ENCODE measurements at regions of chr1 and their contacts with region 1.

Region 1: DNA sequence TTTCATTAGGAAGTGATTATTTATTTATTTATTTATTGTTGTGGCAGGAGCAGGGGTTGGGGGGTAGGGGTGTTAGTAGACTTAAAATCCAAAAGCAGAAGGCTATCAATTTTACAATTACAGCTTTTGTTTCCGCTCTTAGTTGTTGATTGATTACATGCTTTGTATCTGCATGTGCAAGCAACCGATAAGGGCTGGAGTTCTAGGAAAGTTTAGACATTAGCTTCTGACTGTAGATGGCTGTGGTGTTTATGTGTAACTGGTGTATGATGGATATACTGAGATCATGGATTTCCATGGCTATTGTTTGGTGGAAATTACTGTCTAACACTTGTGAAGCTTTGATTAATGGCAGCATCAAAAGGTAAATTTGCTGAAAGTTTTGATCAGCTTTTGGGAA is 2.8 kb downstream of the ST6GALNAC5 start:
- DNase-seq: no peak
- ATAC-seq: no peak
- H3K4me3 ChIP-seq: no peak overlapping the region
- H3K4me3 Mint-ChIP-seq: no peak overlapping the region
- H3K27ac ChIP-seq: no peak overlapping the region
- H3K27ac Mint-ChIP-seq: no peak overlapping the region
- H3K4me1 ChIP-seq: no peaks in the 10 kb centered on the region
- H3K4me1 Mint-ChIP-seq: peaks cover 7% of the 10 kb centered on the region
- H3K27me3 ChIP-seq: peaks cover 3 to 9% of the 10 kb centered on the region in 2 experiments
- H3K27me3 Mint-ChIP-seq: peaks cover 47% of the 10 kb centered on the region
- CTCF ChIP-seq: no peak

Region 2: DNA sequence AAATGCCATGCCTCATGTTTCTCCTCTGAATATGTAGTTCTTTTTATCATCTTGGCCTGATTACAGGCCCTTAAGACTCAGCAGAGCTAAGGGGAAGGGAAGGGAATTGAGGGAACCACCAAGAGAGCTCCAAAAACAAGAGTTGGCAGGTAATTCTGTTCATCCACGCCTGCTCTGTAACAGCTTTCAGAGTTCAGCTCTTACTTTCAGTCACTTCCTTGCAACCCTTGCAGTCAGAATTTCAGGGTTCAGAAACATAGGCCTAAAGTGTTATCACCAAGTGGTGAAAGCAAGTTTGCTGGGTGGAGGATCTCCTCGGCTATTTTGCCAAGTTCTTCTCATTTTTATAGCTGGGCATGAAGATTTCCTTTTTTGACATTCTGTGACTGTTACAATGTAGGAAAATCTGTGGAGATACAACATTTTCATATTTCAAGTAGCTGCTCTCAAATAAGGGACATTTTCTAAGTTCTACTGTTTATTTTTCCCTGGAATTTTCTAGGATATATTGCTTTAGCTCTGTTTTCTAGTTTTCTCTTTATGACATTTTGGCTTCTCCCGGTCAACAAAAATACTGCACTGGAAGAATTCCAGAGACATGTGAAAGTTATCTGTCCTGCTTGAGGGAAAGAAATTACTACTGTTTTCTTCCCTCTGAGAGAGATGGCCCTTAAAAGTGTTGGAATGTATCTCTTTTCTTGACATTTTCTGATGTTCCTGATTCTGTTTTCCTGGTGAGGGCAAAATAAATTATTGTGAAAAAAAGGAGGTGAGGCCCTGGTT is 254.6 kb before region 1 on chr1:
- CTCF ChIA-PET with region 1: no interaction called
- POLR2A ChIA-PET with region 1: no interaction called
- intact Hi-C with region 1: no loop called
- DNase-seq: no peak
- ATAC-seq: no peak
- H3K4me3 ChIP-seq: no peak overlapping the region
- H3K4me3 Mint-ChIP-seq: no peak overlapping the region
- H3K27ac ChIP-seq: no peak overlapping the region
- H3K27ac Mint-ChIP-seq: no peak overlapping the region
- H3K4me1 ChIP-seq: no peaks in the 10 kb centered on the region
- H3K4me1 Mint-ChIP-seq: no peaks in the 10 kb centered on the region
- H3K27me3 ChIP-seq: no peaks in the 10 kb centered on the region
- H3K27me3 Mint-ChIP-seq: no peaks in the 10 kb centered on the region
- CTCF ChIP-seq: no peak

Region 3: DNA sequence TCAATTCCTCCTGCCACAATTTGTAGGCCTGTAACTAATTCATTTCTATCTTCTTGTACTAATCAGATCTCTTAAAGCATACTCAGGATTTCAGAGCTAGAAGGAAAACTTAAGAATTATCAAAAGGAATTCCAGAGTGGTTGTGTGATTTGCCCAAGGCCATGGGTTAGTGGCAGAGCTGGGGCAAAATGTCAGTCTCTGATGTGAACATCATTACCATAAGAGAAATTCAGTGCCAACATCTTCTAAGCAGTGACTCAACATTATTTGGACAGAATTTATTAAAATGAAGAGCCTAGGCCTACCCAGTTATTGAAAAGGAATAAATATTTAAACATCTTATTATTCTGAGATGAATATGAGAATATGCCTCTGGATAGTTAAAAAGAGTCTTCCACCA is 11.7 kb after region 1 on chr1:
- CTCF ChIA-PET with region 1: no interaction called
- POLR2A ChIA-PET with region 1: no interaction called
- intact Hi-C with region 1: loop called in 1 of 2 experiments (anchors 1 kb)
- DNase-seq: no peak
- ATAC-seq: no peak
- H3K4me3 ChIP-seq: no peak overlapping the region
- H3K4me3 Mint-ChIP-seq: no peak overlapping the region
- H3K27ac ChIP-seq: no peak overlapping the region
- H3K27ac Mint-ChIP-seq: no peak overlapping the region
- H3K4me1 ChIP-seq: no peaks in the 10 kb centered on the region
- H3K4me1 Mint-ChIP-seq: no peaks in the 10 kb centered on the region
- H3K27me3 ChIP-seq: no peaks in the 10 kb centered on the region
- H3K27me3 Mint-ChIP-seq: no peaks in the 10 kb centered on the region
- CTCF ChIP-seq: no peak

Region 4: GRCh38 chr1:77060000-77060399 is 190.0 kb after region 1 on chr1:
- CTCF ChIA-PET with region 1: no interaction called
- POLR2A ChIA-PET with region 1: no interaction called
- intact Hi-C with region 1: no loop called
- DNase-seq: no peak
- ATAC-seq: no peak
- H3K4me3 ChIP-seq: no peak overlapping the region
- H3K4me3 Mint-ChIP-seq: no peak overlapping the region
- H3K27ac ChIP-seq: no peak overlapping the region
- H3K27ac Mint-ChIP-seq: no peak overlapping the region
- H3K4me1 ChIP-seq: no peaks in the 10 kb centered on the region
- H3K4me1 Mint-ChIP-seq: no peaks in the 10 kb centered on the region
- H3K27me3 ChIP-seq: no peaks in the 10 kb centered on the region
- H3K27me3 Mint-ChIP-seq: no peaks in the 10 kb centered on the region
- CTCF ChIP-seq: no peak

Measured in CD8-positive, alpha-beta T cell (primary cell).